ENCODE measurements at regions of chr16 and their contacts with region 1.

Region 1: GRCh38 chr16:87778830-87779579 is 13.2 kb upstream of the KLHDC4 start:
- DNase-seq: peak; percentile 90 to 96 (median 95)
- ATAC-seq: peak; percentile 90 to 92
- H3K4me3 ChIP-seq: no peak overlapping the region
- H3K27ac ChIP-seq: no peak overlapping the region
- H3K4me1 ChIP-seq: no peaks in the 10 kb centered on the region
- H3K27me3 ChIP-seq: no peaks in the 10 kb centered on the region

Region 2: GRCh38 chr16:86761111-86762031 is 1017.6 kb before region 1 on chr16:
- intact Hi-C with region 1: no loop called
- DNase-seq: peak; percentile 70 to 86 (median 86)
- ATAC-seq: peak; percentile 79 to 81
- H3K4me3 ChIP-seq: no peak overlapping the region
- H3K27ac ChIP-seq: no peak overlapping the region
- H3K4me1 ChIP-seq: no peaks in the 10 kb centered on the region
- H3K27me3 ChIP-seq: no peaks in the 10 kb centered on the region

Region 3: GRCh38 chr16:87581833-87582203 is 197.2 kb before region 1 on chr16:
- intact Hi-C with region 1: loop called in 1 of 4 experiments (anchors 5 kb)
- DNase-seq: peak; percentile 84 to 90 (median 88)
- ATAC-seq: peak; percentile 90 to 92
- H3K4me3 ChIP-seq: no peak overlapping the region
- H3K27ac ChIP-seq: peak overlapping the region; percentile 68
- H3K4me1 ChIP-seq: no peaks in the 10 kb centered on the region
- H3K27me3 ChIP-seq: no peaks in the 10 kb centered on the region

Region 4: GRCh38 chr16:87860553-87861299 is 81.7 kb after region 1 on chr16:
- intact Hi-C with region 1: no loop called
- DNase-seq: peak in 1 of 3 donors; percentile 75
- ATAC-seq: peak; percentile 55 to 57
- H3K4me3 ChIP-seq: no peak overlapping the region
- H3K27ac ChIP-seq: peak overlapping the region; percentile 31
- H3K4me1 ChIP-seq: peaks cover 3% of the 10 kb centered on the region
- H3K27me3 ChIP-seq: no peaks in the 10 kb centered on the region

Region 5: DNA sequence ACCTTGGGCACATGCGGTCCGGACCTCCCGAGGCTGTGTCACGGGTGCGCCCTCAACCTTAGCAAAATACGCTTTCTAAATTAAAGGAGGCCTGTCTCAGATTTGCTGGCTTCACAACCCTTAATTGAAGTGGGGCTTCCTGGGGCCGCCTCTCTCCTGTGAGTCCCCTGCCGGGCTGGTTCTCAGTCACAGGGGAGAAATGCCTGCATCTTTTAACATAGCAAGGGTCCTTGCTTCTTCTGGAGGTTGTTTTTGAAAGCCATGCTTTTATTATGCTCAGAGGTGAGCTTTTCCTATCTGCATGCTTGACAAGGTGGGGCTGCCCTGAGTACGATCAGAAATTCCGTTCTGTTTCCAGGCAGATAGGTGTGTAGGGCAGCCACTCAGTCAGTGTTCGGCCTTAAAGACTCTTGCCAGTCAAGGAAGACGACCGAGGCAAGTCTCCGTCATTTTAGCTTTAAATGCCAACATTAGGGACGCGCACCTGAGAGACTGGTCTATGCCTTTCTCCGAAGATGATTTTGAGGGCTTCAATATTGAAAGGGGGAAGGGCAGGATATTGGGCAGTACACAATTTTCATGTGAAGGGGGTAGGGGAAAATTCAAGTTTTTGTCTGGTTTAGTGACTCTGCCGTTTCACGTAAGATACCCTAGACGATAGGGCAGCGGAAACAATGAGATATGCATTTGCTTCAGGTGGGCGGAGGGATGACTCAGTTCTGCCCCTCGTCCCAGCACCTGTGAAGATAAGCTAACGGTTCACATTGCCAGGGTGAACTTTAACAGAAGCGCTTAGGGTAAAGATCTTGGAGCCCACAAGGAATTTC is 95.8 kb after region 1 on chr16:
- intact Hi-C with region 1: loop called (anchors 1 to 5 kb)
- DNase-seq: no peak
- ATAC-seq: no peak
- H3K4me3 ChIP-seq: no peak overlapping the region
- H3K27ac ChIP-seq: no peak overlapping the region
- H3K4me1 ChIP-seq: no peaks in the 10 kb centered on the region
- H3K27me3 ChIP-seq: no peaks in the 10 kb centered on the region

Region 6: GRCh38 chr16:87895641-87896141 is 116.7 kb after region 1 on chr16:
- intact Hi-C with region 1: loop called in 1 of 4 experiments (anchors 10 kb)
- DNase-seq: no peak
- ATAC-seq: peak in 1 of 2 donors; percentile 24
- H3K4me3 ChIP-seq: no peak overlapping the region
- H3K27ac ChIP-seq: no peak overlapping the region
- H3K4me1 ChIP-seq: no peaks in the 10 kb centered on the region
- H3K27me3 ChIP-seq: no peaks in the 10 kb centered on the region

Region 7: GRCh38 chr16:88035292-88035691 is 256.3 kb after region 1 on chr16:
- intact Hi-C with region 1: no loop called
- DNase-seq: no peak
- ATAC-seq: peak in 1 of 2 donors; percentile 36
- H3K4me3 ChIP-seq: no peak overlapping the region
- H3K27ac ChIP-seq: no peak overlapping the region
- H3K4me1 ChIP-seq: no peaks in the 10 kb centered on the region
- H3K27me3 ChIP-seq: no peaks in the 10 kb centered on the region

Measured in right cardiac atrium (tissue), 5 donors.